ENCODE measurements at regions of chr3 and their contacts with region 1.

Region 1: DNA sequence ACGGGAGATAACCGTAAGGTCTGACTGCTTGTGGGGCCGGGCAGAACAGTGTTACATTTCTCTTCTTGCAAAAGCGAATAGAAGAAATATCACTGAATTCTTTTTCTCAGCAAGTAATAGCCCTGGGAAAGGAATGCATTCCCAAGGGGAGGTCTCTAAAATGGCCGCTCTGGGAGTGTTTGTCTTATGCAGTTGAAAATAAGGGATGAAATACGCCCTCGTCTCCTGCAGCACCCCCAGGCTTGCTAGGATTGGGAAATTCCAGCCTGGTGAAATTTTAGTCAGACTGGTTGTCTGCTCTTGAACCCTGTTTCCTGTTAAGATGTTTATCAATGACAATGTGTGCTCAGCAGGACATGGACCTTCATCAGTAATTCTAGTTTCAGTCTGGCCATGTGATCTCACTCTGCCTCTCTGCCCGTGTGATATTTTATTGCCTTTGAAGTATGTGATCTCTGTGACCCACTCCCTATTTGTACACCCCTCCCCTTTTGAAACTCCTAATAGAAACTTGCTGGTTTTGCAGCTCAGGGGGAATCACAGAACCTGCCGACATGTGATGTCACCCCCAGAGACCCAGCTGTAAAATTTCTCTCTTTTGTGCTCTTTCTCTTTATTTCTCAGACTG is 715.6 kb downstream of the ROBO1 start:
- DNase-seq: no peak
- H3K4me3 ChIP-seq: no peak overlapping the region
- H3K27ac ChIP-seq: no peak overlapping the region
- H3K4me1 ChIP-seq: no peaks in the 10 kb centered on the region
- H3K27me3 ChIP-seq: no peaks in the 10 kb centered on the region
- CTCF ChIP-seq: no peak

Region 2: GRCh38 chr3:79167651-79168416 is 115.7 kb after region 1 on chr3:
- CTCF ChIA-PET with region 1: interaction called, 30 read pairs
- dilution Hi-C with region 1: no loop called
- in situ Hi-C with region 1: no loop called
- intact Hi-C with region 1: no loop called
- DNase-seq: peak; percentile 25
- H3K4me3 ChIP-seq: no peak overlapping the region
- H3K27ac ChIP-seq: no peak overlapping the region
- H3K4me1 ChIP-seq: no peaks in the 10 kb centered on the region
- H3K27me3 ChIP-seq: no peaks in the 10 kb centered on the region
- CTCF ChIP-seq: no peak

Measured in mammary epithelial cell (primary cell).